PC-9 (cell line): ENCODE measurements at regions of chr1 and their contacts with region 1.

Region 1: GRCh38 chr1:86419277-86419903 is 4.6 kb upstream of the CLCA2 start:
- DNase-seq: peak; percentile 55 to 62
- H3K4me3 ChIP-seq: no peak overlapping the region
- H3K27ac ChIP-seq: no peak overlapping the region
- H3K4me1 ChIP-seq: peaks cover 36% of the 10 kb centered on the region
- H3K27me3 ChIP-seq: no peaks in the 10 kb centered on the region
- CTCF ChIP-seq: peak; percentile 85

Region 2: DNA sequence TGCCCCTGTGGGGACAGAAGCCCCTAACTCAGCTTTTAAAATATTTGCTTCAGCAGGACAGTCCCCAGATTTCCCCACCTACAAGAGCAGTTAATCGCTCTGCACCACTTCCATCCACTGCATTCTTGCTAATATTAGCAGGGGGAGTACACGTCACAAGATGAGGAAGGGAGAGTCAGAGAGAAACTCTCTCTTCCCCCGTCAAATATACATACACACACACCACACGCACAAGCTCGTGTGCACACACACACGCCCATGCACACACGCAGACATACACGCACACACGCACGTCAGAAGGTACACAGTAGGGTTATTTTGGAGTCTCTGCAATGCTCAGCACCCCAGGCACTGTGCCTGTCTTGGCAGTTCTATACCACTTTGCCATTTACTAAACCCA is 51.5 kb after region 1 on chr1:
- CTCF ChIA-PET with region 1: no interaction called
- POLR2A ChIA-PET with region 1: no interaction called
- intact Hi-C with region 1: loop called (anchors 1 kb)
- DNase-seq: no peak
- H3K4me3 ChIP-seq: no peak overlapping the region
- H3K27ac ChIP-seq: no peak overlapping the region
- H3K4me1 ChIP-seq: no peaks in the 10 kb centered on the region
- H3K27me3 ChIP-seq: no peaks in the 10 kb centered on the region
- CTCF ChIP-seq: no peak